Sciatic nerve (tissue), 2 donors: ENCODE measurements at regions of chr4 and their contacts with region 1.

Region 1: DNA sequence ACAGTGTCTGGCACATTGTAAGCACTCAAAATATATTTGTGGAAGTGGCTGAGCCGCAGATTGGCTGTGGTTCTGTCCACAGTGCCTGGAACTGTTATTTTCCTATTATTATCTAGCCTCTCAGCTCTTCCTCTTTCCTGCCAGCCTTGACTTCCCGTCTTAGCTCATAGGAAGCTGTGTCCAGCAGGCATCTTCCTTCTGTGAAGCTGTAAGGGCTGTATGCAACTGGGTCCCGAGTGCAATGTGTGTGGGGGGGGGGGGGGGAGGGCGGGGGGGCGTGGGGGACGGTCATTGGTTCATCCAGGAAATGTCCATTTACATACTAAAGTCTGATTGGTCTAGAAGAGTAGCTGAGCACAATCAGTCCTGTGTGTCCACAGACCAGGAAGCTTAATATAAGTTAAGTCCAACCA is 210.7 kb downstream of the PDGFRA start:
- DNase-seq: no peak
- ATAC-seq: peak; percentile 91

Region 2: GRCh38 chr4:54165438-54165837 is 274.4 kb before region 1 on chr4:
- intact Hi-C with region 1: no loop called
- DNase-seq: no peak
- ATAC-seq: no peak

Region 3: DNA sequence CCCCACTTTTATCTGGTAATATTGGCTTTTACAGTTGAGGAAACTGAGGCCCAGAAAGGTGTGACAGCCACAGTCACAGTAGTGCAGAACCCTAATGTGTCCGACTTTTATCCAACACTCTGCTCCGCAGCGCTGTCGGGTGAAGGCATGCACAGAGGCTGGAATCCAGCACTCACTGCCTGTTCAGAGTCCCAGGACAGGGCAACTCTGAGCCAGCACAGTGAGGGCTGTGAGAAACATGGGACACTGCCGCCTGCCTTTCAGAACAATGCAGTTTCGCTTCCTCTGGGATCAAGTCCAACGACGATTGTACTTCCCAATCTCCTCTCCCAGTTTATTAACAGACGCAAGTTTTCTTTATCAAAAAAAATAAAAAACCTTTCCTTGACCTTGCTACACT is 252.7 kb before region 1 on chr4:
- intact Hi-C with region 1: no loop called
- DNase-seq: peak; percentile 58
- ATAC-seq: peak; percentile 66

Region 4: DNA sequence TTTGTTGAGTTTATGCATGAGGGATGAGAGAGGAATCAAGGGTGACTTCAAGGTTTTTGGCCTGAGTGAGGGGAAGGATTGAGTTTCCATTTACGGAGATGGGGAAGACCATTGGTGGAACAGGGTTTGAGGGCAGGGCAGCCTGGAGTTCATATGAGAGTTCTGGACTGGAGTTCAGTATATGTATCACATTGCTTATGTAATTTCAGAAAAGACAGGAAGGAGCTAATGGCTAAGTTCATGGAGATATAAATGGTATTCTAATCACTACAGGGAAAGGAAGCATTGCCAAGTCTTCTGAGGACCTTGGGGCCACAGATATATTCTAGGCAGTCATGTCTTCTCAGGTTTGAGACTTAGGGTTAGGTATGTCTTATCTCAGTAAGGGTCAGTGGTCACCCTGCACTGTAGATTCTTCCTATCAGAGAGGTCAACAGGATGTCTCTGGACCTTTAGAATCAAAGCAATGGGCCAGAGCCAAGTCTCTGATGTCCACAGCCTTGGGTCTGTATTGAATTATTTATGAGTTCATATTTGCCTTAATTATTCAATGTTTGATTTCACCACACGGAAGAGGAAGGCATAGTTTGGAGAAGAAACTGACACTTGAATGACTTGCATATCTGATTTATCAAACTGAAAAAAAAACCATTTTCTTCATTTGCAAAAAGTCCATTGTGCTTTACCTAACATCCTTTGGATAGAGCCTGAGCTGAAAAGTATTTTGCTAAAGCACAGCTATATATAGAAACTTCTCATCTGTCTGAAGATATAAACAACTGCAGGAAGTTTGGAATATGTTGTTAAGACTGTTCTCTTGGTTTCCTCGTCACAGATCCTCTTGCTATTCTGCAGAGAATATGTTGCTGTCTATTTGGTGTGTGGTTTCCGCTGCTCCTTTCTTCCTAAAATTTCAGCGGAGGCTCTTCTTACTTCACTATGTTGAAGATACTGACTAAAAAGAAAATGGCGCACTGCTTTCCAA is 71.3 kb before region 1 on chr4:
- intact Hi-C with region 1: no loop called
- DNase-seq: no peak
- ATAC-seq: no peak

Region 5: GRCh38 chr4:54384563-54384962 is 55.3 kb before region 1 on chr4:
- intact Hi-C with region 1: loop called (anchors 10 kb)
- DNase-seq: peak; percentile 60
- ATAC-seq: peak; percentile 28